A673 (cell line): ENCODE measurements at regions of chr15 and their contacts with region 1.

Region 1: DNA sequence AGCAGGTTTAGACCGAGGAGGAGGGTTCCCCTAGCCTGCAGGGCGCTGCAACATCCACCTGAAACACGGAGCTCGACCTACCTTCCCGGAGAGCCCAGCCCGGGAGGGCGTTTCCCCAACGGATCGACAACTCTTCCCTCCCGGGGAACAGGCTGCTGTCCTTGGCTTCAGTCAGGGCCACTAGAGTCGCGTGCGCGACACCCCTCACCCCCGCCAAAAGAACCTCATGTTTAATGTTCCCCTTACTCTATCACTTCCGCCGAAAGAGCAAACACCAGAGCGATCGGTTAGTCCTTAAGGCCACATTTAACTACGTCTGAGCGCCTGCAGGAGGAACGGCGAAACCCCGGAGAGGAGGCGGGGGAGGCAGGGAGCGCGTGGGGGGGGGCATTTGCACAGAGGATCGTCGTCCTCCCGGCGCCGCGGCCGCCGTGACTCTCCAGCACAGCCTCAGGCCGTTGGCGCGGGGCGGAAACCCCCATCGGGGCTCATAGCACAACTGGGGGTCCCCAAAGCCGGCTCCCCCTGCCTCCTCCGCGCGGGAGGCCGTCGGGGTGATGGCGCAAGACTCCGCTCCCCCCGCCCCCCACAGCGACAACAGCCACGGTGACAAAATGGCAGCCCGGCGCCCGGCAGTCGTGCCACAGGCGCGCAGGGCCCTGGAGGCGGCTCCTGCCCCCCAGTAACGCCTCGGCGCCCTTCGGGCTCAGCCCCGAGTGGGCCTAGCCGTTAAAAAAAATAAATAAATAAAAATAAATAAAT is 3.2 kb downstream of the ANP32A start:
- DNase-seq: peak; percentile 80
- H3K4me3 ChIP-seq: peak overlapping the region; percentile 74
- H3K27ac ChIP-seq: peak overlapping the region; percentile 99
- H3K4me1 ChIP-seq: peaks cover 35% of the 10 kb centered on the region
- H3K27me3 ChIP-seq: no peaks in the 10 kb centered on the region
- CTCF ChIP-seq: no peak

Region 2: DNA sequence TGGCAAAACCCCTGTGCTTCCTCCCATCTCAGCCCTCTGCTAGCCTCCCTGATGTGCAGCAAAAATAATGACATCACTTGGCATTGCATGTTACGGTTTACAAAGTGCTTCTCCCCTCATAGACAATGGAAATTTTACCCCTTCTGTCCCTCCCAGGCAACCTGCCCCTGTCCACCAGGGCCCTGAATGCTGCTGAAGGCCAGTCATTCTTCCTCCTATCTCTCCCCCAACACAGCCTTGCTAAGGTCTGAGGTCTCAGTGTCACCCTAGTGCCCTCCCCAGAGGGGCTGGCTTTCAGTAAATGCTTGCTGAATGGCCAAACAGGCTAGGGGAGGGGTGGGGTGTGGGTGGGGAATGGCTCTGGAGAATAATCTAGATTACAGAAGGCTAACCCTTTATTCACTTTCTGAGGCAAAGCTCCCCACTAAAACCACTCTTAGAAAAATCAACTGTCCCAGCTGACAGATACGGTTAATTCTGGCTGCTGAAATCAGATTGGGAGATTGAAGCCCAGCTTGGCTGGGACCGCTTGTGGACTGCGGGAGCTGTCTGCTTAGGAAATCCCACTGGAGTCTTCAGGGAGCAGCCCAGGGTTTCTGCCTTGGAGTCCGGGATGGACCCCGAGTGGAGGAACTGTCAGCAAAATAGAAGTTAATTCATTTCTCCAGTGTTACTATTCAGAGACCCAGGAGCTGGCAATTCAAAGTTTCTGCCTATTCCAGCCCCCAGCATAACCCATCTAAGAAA is 19.7 kb before region 1 on chr15:
- CTCF ChIA-PET with region 1: no interaction called
- POLR2A ChIA-PET with region 1: interaction called, 3 read pairs
- intact Hi-C with region 1: loop called (anchors 2 kb)
- DNase-seq: no peak
- H3K4me3 ChIP-seq: no peak overlapping the region
- H3K27ac ChIP-seq: no peak overlapping the region
- H3K4me1 ChIP-seq: peaks cover 25% of the 10 kb centered on the region
- H3K27me3 ChIP-seq: no peaks in the 10 kb centered on the region
- CTCF ChIP-seq: no peak